ENCODE measurements at regions of chr19 and their contacts with region 1.

Region 1: GRCh38 chr19:48391107-48391986 is at the start of gene KDELR1:
- DNase-seq: no peak
- ATAC-seq: peak; percentile 70
- H3K4me3 ChIP-seq: peak within 1 kb of the TSS; percentile 86 to 87
- H3K27ac ChIP-seq: peak within 1 kb of the TSS; percentile 88
- H3K4me1 ChIP-seq: peaks cover 19% of the 10 kb centered on the region
- H3K27me3 ChIP-seq: no peaks in the 10 kb centered on the region
- CTCF ChIP-seq: peak; percentile 92
- total RNA-seq, gene KDELR1: 111 TPM

Region 2: DNA sequence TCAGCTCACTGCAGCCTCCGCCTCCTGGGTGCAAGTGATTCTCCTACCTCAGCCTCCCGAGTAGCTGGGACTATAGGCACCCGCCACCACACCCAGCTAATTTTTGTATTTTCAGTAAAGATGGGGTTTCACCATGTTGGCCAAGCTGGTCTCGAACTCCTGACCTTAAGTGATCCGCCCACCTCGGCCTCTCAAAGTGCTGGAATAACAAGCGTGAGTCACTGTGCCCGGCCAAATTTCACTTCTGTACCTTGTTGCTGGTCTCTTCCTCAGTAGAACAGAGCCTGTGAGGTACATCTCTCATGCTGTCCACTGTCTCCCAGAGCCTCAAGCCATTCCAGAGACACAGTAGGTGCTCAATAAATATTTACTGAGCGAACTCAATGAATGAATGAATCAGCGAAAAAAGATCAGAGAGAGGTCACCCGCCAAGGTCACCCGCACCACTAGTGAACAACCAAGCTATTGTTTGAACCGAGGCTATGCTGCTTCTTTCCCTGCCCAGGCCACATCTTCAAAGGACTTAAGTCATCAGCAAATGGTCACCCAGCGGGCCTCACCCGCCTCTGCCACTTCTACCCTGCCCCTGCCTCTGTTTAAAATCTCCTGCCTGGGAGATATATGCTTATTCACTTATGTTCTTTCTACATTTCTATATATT is 36.9 kb before region 1 on chr19:
- CTCF ChIA-PET with region 1: interaction called, 15 read pairs
- POLR2A ChIA-PET with region 1: no interaction called
- in situ Hi-C with region 1: no loop called
- intact Hi-C with region 1: no loop called
- DNase-seq: peak; percentile 61
- ATAC-seq: peak; percentile 89
- H3K4me3 ChIP-seq: no peak overlapping the region
- H3K27ac ChIP-seq: no peak overlapping the region
- H3K4me1 ChIP-seq: peaks cover 3% of the 10 kb centered on the region
- H3K27me3 ChIP-seq: no peaks in the 10 kb centered on the region
- CTCF ChIP-seq: no peak

Region 3: GRCh38 chr19:48403606-48404005 is 12.3 kb after region 1 on chr19:
- CTCF ChIA-PET with region 1: interaction called, 3 read pairs
- POLR2A ChIA-PET with region 1: interaction called, 17 read pairs
- in situ Hi-C with region 1: no loop called
- intact Hi-C with region 1: no loop called
- DNase-seq: no peak
- ATAC-seq: peak; percentile 73
- H3K4me3 ChIP-seq: no peak overlapping the region
- H3K27ac ChIP-seq: no peak overlapping the region
- H3K4me1 ChIP-seq: no peaks in the 10 kb centered on the region
- H3K27me3 ChIP-seq: no peaks in the 10 kb centered on the region
- CTCF ChIP-seq: no peak

Region 4: GRCh38 chr19:48442116-48443035 is 51.0 kb after region 1 on chr19:
- CTCF ChIA-PET with region 1: no interaction called
- POLR2A ChIA-PET with region 1: no interaction called
- in situ Hi-C with region 1: no loop called
- intact Hi-C with region 1: no loop called
- DNase-seq: no peak
- ATAC-seq: no peak
- H3K4me3 ChIP-seq: no peak overlapping the region
- H3K27ac ChIP-seq: no peak overlapping the region
- H3K4me1 ChIP-seq: peaks cover 7% of the 10 kb centered on the region
- H3K27me3 ChIP-seq: no peaks in the 10 kb centered on the region
- CTCF ChIP-seq: no peak

Region 5: DNA sequence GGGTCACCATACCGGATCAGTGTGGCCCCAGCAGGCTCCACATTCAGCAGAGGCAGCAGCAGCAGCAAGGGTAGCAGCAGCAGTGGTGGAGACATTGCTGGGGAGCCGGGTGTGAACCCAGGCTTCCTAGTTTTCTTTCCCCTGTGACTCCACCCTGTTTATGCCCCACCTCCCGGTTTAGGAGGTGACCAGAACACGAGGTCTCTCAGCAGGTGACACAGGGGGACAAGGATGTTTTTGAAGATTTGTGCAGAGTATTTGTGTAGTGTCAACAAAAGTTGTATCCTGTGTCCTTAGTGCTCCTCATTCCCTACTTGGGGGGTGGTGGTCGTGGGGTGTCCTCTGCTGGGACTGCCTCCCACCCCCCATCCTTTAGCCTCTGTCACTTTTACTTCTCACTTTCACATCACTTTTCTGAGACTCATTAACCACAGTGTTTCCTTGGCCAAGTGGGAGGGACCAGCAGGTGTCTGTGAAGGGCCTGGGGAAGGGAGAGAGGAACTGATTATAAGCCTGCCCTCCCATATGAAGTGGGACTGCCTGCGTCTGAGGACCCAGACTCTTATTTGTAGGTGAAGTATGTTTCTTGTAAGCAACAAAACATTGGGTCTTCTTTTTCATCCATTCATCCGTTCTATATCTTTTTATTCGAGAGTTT is 1953.4 kb after region 1 on chr19:
- CTCF ChIA-PET with region 1: interaction called, 14 read pairs
- POLR2A ChIA-PET with region 1: no interaction called
- in situ Hi-C with region 1: no loop called
- intact Hi-C with region 1: no loop called
- DNase-seq: no peak
- ATAC-seq: no peak
- H3K4me3 ChIP-seq: no peak overlapping the region
- H3K27ac ChIP-seq: no peak overlapping the region
- H3K4me1 ChIP-seq: no peaks in the 10 kb centered on the region
- H3K27me3 ChIP-seq: no peaks in the 10 kb centered on the region
- CTCF ChIP-seq: no peak